ENCODE measurements at regions of chr12 and their contacts with region 1.

Region 1: DNA sequence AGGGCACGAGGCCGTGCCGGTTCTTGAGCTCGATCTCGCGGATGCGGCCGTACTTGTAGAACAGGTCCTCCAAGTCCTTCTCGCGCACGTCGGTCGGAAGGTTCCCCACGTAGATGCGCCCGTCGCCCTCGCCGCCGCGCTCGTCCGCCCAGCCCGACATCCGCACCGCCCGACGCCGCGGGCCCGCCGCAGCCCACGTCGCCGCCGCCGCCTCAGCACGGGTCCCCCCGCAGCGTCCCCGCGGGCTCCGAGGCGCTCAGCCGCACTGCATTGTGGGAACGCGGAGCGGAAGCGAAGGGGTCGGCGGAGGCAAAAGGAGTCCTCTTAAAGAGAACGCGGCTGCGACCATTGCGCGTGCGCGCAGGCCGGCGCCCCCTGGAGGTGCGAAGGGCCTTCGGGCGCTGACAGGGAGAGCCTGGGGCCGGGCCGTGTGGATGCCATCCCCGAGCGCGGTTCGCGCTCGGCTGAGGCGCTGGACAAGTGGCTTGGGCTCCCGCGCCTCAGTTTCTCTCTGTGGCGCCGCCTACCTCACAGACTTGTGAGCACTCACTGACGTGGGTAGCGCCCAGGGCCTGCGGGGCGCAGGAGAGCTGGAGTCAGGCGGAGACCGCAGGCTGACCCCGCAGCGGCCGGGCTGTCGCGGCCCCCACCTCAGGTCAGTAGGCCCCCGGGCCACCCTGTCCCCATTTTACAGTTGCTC is at the start of gene SRSF9:
- DNase-seq: peak; percentile 100
- H3K4me3 Mint-ChIP-seq: peak within 1 kb of the TSS; percentile 90
- H3K27ac Mint-ChIP-seq: peak within 1 kb of the TSS; percentile 88
- H3K4me1 Mint-ChIP-seq: peaks cover 34% of the 10 kb centered on the region
- H3K27me3 Mint-ChIP-seq: peaks cover under 1% of the 10 kb centered on the region
- total RNA-seq, gene SRSF9: 249 and 255 TPM in 2 replicates

Region 2: GRCh38 chr12:120495723-120496412 is 26.3 kb after region 1 on chr12 and contains the start of gene DYNLL1:
- intact Hi-C with region 1: loop called (anchors 1 kb)
- DNase-seq: peak; percentile 100
- H3K4me3 Mint-ChIP-seq: peak within 1 kb of the TSS; percentile 94
- H3K27ac Mint-ChIP-seq: peak within 1 kb of the TSS; percentile 82
- H3K4me1 Mint-ChIP-seq: peaks cover 31% of the 10 kb centered on the region
- H3K27me3 Mint-ChIP-seq: no peaks in the 10 kb centered on the region
- total RNA-seq, gene DYNLL1: 330 and 351 TPM in 2 replicates

Region 3: DNA sequence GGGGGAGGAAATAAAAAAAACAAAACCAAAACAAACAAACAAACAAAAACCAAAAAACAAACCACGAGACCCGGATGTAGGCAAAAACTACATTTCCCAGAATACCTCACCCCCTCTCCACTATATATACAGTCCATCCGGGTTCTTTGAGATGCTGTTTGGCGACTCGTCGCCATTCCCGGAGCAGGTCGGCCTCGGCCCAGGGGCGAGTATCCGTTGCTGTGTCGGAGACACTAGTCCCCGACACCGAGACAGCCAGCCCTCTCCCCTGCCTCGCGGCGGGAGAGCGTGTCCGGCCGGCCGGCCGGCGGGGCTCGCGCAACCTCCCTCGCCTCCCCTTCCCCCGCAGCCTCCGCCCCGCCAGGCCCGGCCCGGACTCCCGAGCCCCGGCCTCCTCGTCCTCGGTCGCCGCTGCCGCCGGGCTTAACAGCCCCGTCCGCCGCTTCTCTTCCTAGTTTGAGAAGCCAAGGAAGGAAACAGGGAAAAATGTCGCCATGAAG is 64.7 kb after region 1 on chr12 and contains the start of gene RNF10:
- intact Hi-C with region 1: loop called (anchors 2 kb)
- DNase-seq: peak; percentile 94
- H3K4me3 Mint-ChIP-seq: peak within 1 kb of the TSS; percentile 96
- H3K27ac Mint-ChIP-seq: peak within 1 kb of the TSS; percentile 96
- H3K4me1 Mint-ChIP-seq: peaks cover 45% of the 10 kb centered on the region
- H3K27me3 Mint-ChIP-seq: no peaks in the 10 kb centered on the region
- total RNA-seq, gene RNF10: 153 and 160 TPM in 2 replicates